ENCODE measurements at regions of chr19 and their contacts with region 1.

Region 1: GRCh38 chr19:49820125-49820524 is 2.0 kb downstream of the MED25 start:
- DNase-seq: no peak
- ATAC-seq: no peak
- H3K4me3 ChIP-seq: no peak overlapping the region
- H3K27ac ChIP-seq: no peak overlapping the region
- H3K4me1 ChIP-seq: peaks cover 15% of the 10 kb centered on the region; the same call in 2 of the 3 replicates
- CTCF ChIP-seq: no peak
- EP300 ChIP-seq: no peak
- POLR2A ChIP-seq: no peak
- RAD21 ChIP-seq: no peak

Region 2: DNA sequence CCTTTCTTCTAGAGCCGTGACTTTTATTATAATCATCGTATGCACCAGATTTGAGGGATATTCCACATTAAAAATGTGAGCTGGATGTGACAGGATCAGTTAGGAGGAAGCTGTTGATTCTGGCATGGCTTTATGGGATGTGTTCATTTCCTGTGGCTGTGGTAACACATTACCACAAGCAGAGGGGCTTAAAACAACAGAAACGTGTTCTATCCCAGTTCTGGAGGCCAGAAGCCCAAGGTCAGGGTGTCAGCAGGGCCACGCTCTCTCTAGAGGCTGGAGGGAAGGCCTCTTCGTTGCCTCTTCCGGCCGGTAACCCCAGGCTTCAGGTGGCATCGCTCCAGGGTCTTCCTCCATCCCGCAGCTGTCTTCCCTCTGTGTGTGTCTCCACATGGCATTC is 12.4 kb after region 1 on chr19:
- CTCF ChIA-PET with region 1: interaction called, 10 read pairs
- POLR2A ChIA-PET with region 1: interaction called, 3 read pairs
- DNase-seq: no peak
- ATAC-seq: no peak
- H3K4me3 ChIP-seq: no peak overlapping the region
- H3K27ac ChIP-seq: no peak overlapping the region
- H3K4me1 ChIP-seq: no peaks in the 10 kb centered on the region
- CTCF ChIP-seq: no peak
- EP300 ChIP-seq: no peak
- POLR2A ChIP-seq: no peak
- RAD21 ChIP-seq: no peak

Measured in A549 (cell line).